GM23248 (cell line): ENCODE measurements at regions of chr1 and their contacts with region 1.

Region 1: DNA sequence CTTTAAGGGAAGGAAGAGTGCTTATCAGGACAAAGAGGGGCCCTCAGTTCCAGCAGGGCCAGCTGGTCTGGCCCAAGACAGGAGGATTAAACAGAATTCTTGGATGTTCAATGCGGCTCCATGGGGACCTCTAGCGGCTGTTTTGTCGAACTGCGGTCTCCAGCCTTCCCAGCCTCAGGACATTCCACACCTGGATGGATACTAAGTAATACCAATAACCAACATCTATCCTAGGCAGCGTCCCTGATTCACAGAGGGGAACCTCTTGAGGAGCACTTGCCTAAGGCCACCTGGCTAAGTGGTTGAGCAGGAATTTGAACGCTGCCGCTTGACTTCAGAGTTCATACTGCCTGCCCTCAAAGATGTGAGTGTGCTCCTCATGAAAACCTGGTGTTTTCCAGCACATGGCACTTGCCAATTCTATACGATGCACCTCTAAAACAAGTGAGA is 15.5 kb upstream of the CD247 start:
- DNase-seq: peak; percentile 64
- H3K4me3 ChIP-seq: no peak overlapping the region
- H3K27ac ChIP-seq: no peak overlapping the region
- H3K4me1 ChIP-seq: no peaks in the 10 kb centered on the region
- H3K27me3 ChIP-seq: 0 out of 2 replicates have a peak, but pooled peaks cover 8% of the 10 kb centered on the region

Region 2: GRCh38 chr1:167066333-167067122 is 467.3 kb before region 1 on chr1:
- in situ Hi-C with region 1: loop called (anchors 10 kb)
- DNase-seq: peak; percentile 66
- H3K4me3 ChIP-seq: peak overlapping the region; percentile 52
- H3K27ac ChIP-seq: no peak overlapping the region
- H3K4me1 ChIP-seq: no peaks in the 10 kb centered on the region
- H3K27me3 ChIP-seq: peaks cover 3% of the 10 kb centered on the region; the same call in 1 of the 2 replicates

Region 3: DNA sequence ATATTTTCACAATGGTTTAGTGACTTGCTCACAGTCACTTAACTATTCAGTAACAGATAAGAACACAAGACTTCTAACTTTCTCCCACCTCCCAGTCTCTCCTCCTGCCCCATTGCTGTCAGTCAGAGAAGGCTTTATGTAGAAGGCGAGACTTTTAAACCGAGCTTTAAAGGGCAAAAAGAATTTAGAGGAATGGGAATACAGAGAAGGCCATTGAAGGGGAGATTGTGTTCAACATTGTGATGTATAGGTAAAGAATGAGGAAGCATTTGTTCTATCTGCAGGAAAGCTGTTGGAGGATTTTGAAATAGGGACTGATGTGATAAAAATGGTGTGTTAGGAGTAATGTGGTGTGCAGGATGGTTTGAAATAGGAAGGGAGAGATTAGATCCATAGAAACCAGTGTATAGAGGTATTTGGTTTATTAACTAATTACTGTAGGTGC is 305.9 kb before region 1 on chr1:
- in situ Hi-C with region 1: no loop called
- DNase-seq: peak; percentile 17
- H3K4me3 ChIP-seq: no peak overlapping the region
- H3K27ac ChIP-seq: no peak overlapping the region
- H3K4me1 ChIP-seq: peaks cover 9% of the 10 kb centered on the region
- H3K27me3 ChIP-seq: no peaks in the 10 kb centered on the region

Region 4: DNA sequence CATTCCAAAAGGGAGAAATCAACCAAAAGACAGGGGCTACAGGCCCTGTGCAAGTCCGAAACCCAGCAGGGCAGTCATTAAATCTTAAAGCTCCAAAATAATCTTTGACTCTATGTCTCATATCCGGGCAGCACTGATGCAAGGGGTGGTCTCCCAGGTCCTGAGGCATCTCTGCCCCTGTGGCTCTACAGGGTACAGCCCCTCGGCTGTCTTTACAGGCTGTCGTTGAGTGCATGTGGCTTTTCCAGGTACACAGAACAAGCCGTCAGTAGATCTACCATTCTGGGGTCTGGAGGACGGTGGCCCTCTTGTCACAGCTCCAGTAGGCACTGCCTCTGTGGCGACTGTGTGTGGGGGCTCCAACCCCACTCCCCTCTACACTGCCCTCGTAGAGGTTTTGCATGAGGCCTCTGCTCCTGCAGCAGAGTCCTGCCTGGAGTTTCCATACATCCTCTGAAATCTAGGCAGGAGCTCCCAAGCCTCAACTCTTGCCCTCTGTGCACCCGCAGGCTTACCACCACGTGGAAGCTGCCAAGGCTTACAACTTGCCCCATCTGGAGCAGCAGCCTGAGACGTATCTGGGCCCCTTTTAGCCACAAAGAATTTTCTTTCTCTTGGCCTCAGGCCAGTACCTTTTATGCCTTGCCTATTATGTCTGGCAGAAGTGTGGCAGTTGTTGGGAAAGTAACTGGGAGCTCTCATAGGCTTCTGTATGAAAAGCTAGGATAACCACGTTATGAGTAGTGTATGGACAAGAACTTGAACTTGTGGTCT is 260.7 kb before region 1 on chr1:
- in situ Hi-C with region 1: loop called (anchors 25 kb)
- DNase-seq: peak; percentile 8
- H3K4me3 ChIP-seq: no peak overlapping the region
- H3K27ac ChIP-seq: no peak overlapping the region
- H3K4me1 ChIP-seq: no peaks in the 10 kb centered on the region
- H3K27me3 ChIP-seq: no peaks in the 10 kb centered on the region